Activated CD8-positive, alpha-beta memory T cell treated with anti-CD3 and anti-CD28 coated beads, Interleukin-2, amount 10 ng/mL, durations not matched to agents 7 days and 5 days (primary cell): ENCODE measurements at regions of chr15 and their contacts with region 1.

Region 1: DNA sequence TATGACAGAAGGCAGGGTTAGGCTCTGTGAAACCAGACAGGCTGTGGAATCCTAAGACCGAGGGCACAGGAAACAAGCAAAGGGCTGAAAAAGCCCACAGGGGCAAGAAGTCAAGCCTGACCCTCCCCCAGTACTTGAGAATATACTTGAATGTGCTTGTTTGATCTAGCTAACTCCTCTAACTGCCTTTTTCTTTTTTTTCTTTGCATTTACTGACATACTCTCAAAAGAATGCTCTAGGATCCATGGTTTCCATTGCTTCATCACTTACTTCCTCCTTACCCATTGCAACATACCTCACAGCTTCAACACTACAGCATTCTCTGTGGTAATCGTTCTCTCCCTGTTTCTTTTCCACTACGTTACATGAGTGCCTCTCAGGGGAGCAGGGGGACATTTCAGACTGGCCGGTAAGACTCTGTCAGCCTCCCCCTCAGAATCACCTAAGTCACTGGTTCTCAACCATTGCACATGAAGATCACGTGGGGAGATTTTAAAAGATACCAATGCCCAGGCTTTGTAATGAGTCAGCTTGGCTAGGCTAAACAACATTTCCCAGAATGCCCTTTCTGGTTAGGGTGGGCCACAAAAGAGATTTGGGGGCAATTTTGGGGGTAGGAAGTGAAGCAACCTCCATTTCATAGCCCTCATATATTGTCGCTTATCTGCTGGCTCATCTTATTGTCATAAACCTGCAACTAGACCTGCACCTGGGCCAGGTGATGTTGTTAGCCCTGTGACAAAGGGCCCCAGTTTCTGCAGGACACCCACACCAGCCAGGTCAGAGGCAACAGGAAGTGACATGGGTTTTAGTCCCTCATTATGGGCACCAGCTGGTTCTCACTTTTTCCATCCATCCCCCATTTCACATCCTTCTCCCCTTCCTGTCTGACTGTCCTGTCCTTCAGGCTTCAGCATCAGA is 24.6 kb upstream of the RSL24D1 start:
- DNase-seq: peak; percentile 80
- ATAC-seq: peak; percentile 74
- H3K4me3 Mint-ChIP-seq: peak overlapping the region; percentile 63
- H3K27ac Mint-ChIP-seq: peak overlapping the region; percentile 96
- H3K4me1 Mint-ChIP-seq: peaks cover 89% of the 10 kb centered on the region
- H3K27me3 Mint-ChIP-seq: no peaks in the 10 kb centered on the region

Region 2: DNA sequence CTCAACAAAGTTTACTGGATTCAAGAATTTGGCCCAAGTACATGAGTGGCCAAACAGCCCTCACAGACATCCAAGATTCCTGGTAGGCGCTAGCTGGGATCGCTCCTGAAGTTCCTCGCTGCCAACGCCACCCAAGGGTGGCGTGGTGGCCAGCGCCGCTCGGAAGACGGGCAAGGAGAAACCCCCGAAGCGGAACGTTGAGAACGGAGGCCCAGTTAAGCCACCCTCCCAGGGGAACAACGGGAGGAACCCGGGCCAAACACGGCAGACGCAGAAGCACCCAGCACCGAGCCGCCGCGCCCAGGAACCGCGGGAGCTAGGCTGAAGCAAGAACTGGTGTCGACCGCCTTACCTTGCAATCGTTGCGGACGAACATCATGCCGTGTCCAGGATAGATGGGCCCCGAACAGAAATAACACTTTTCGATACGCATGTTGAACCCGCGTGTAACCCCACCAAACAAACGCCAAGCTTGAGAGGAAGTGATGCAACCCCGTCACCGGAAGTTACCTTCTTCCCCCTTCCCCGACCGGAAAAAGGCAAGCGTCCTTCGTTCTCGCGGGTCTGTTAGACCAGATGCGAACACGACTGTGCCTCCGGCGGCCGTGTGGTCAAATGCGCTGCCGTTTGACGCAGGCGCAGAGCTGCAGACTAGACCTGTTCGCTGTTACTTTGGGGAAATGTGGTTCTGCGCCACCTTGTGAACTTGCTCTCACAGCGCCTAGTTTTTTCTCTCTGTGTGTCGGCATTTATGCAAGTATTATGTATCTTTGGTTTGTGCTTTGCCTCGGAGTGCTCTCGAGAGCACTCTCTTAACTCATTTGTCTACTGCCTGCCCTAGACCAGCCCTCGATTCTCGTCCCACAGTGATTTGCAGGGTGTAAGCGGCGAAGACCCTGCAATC is 24.6 kb before region 1 on chr15 and contains the start of gene RSL24D1:
- CTCF ChIA-PET with region 1: interaction called, 14 read pairs
- DNase-seq: peak; percentile 99
- ATAC-seq: peak; percentile 96
- H3K4me3 Mint-ChIP-seq: no peak within 1 kb of the TSS
- H3K27ac Mint-ChIP-seq: no peak within 1 kb of the TSS
- H3K4me1 Mint-ChIP-seq: peaks cover 22% of the 10 kb centered on the region
- H3K27me3 Mint-ChIP-seq: no peaks in the 10 kb centered on the region
- total RNA-seq, gene RSL24D1: 79.1 to 94.2 TPM

Region 3: DNA sequence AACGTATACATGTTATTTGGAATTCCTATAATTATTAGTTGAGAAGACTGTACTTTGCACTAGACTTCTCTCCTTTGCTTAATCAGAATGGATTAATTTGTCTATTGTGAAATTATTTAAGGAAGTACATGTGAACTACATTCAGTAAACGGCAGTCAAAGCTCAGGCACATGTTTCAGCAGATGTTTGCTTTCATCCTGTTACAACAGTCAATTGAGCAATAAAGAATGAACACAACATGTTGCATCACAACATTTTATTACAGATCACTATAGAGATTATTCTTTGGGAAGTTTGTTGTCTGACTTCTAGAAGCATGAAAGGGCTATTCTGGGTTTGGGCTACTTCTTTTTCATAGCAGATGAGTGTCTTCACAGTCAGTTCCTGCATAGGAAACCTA is 29.0 kb after region 1 on chr15:
- CTCF ChIA-PET with region 1: interaction called, 11 read pairs
- DNase-seq: no peak
- ATAC-seq: no peak
- H3K4me3 Mint-ChIP-seq: no peak overlapping the region
- H3K27ac Mint-ChIP-seq: peak overlapping the region; percentile 91
- H3K4me1 Mint-ChIP-seq: peaks cover 84% of the 10 kb centered on the region
- H3K27me3 Mint-ChIP-seq: no peaks in the 10 kb centered on the region

Region 4: GRCh38 chr15:55277116-55277564 is 55.8 kb after region 1 on chr15:
- CTCF ChIA-PET with region 1: interaction called, 100 read pairs
- DNase-seq: peak; percentile 94
- ATAC-seq: peak; percentile 69
- H3K4me3 Mint-ChIP-seq: peak overlapping the region; percentile 66
- H3K27ac Mint-ChIP-seq: peak overlapping the region; percentile 99
- H3K4me1 Mint-ChIP-seq: peaks cover 84% of the 10 kb centered on the region
- H3K27me3 Mint-ChIP-seq: no peaks in the 10 kb centered on the region

Region 5: GRCh38 chr15:55290528-55291057 is 69.2 kb after region 1 on chr15:
- CTCF ChIA-PET with region 1: interaction called, 100 read pairs
- DNase-seq: peak; percentile 90
- ATAC-seq: peak; percentile 70
- H3K4me3 Mint-ChIP-seq: peak overlapping the region; percentile 95
- H3K27ac Mint-ChIP-seq: peak overlapping the region; percentile 89
- H3K4me1 Mint-ChIP-seq: peaks cover 25% of the 10 kb centered on the region
- H3K27me3 Mint-ChIP-seq: no peaks in the 10 kb centered on the region